ENCODE measurements at regions of chr1 and their contacts with region 1.

Region 1: GRCh38 chr1:160006312-160006940 is 25.4 kb downstream of the PIGM start:
- DNase-seq: peak; percentile 79
- H3K4me3 Mint-ChIP-seq: no peak overlapping the region
- H3K27ac Mint-ChIP-seq: no peak overlapping the region
- H3K4me1 Mint-ChIP-seq: no peaks in the 10 kb centered on the region
- H3K27me3 Mint-ChIP-seq: peaks cover 9% of the 10 kb centered on the region

Region 2: GRCh38 chr1:159798893-159799292 is 207.5 kb before region 1 on chr1:
- CTCF ChIA-PET with region 1: interaction called, 57 read pairs
- POLR2A ChIA-PET with region 1: no interaction called
- DNase-seq: peak; percentile 52
- H3K4me3 Mint-ChIP-seq: no peak overlapping the region
- H3K27ac Mint-ChIP-seq: no peak overlapping the region
- H3K4me1 Mint-ChIP-seq: peaks cover 16% of the 10 kb centered on the region
- H3K27me3 Mint-ChIP-seq: peaks cover 41% of the 10 kb centered on the region

Region 3: GRCh38 chr1:159924981-159925712 is 81.3 kb before region 1 on chr1 and contains the start of gene TAGLN2:
- CTCF ChIA-PET with region 1: interaction called, 52 read pairs
- POLR2A ChIA-PET with region 1: interaction called, 7 read pairs
- DNase-seq: peak; percentile 91
- H3K4me3 Mint-ChIP-seq: peak within 1 kb of the TSS; percentile 100
- H3K27ac Mint-ChIP-seq: peak within 1 kb of the TSS; percentile 98
- H3K4me1 Mint-ChIP-seq: peaks cover 36% of the 10 kb centered on the region
- H3K27me3 Mint-ChIP-seq: no peaks in the 10 kb centered on the region
- total RNA-seq, gene TAGLN2: 548 to 554 TPM

Region 4: GRCh38 chr1:159970932-159971342 is 35.5 kb before region 1 on chr1:
- CTCF ChIA-PET with region 1: interaction called, 19 read pairs
- POLR2A ChIA-PET with region 1: no interaction called
- DNase-seq: no peak
- H3K4me3 Mint-ChIP-seq: no peak overlapping the region
- H3K27ac Mint-ChIP-seq: no peak overlapping the region
- H3K4me1 Mint-ChIP-seq: no peaks in the 10 kb centered on the region
- H3K27me3 Mint-ChIP-seq: peaks cover 30% of the 10 kb centered on the region

Region 5: GRCh38 chr1:160031365-160032164 is 25.1 kb after region 1 on chr1 and contains the start of gene PIGM:
- CTCF ChIA-PET with region 1: interaction called, 32 read pairs
- POLR2A ChIA-PET with region 1: interaction called, 3 read pairs
- DNase-seq: peak; percentile 95
- H3K4me3 Mint-ChIP-seq: peak within 1 kb of the TSS; percentile 90
- H3K27ac Mint-ChIP-seq: peak within 1 kb of the TSS; percentile 80
- H3K4me1 Mint-ChIP-seq: peaks cover 32% of the 10 kb centered on the region
- H3K27me3 Mint-ChIP-seq: peaks cover 2% of the 10 kb centered on the region
- total RNA-seq, gene PIGM: 5.2 to 5.7 TPM

Measured in activated CD4-positive, alpha-beta memory T cell treated with anti-CD3 and anti-CD28 coated beads, Interleukin-2, amount 10 ng/mL, durations not matched to agents 7 days and 5 days (primary cell).